ENCODE measurements at regions of chr5 and their contacts with region 1.

Region 1: GRCh38 chr5:79878721-79879336 is 112.2 kb downstream of the MTX3 start:
- DNase-seq: no peak
- ATAC-seq: no peak
- H3K4me3 ChIP-seq: no peak overlapping the region
- H3K27ac ChIP-seq: no peak overlapping the region
- H3K4me1 ChIP-seq: peaks cover 0 to 7% of the 10 kb centered on the region in 2 donors
- H3K27me3 ChIP-seq: no peaks in the 10 kb centered on the region
- CTCF ChIP-seq: no peak
- POLR2A ChIP-seq: no peak

Region 2: GRCh38 chr5:79962575-79963222 is 83.9 kb after region 1 on chr5:
- in situ Hi-C with region 1: no loop called
- intact Hi-C with region 1: loop called (anchors 10 kb)
- DNase-seq: no peak
- ATAC-seq: no peak
- H3K4me3 ChIP-seq: no peak overlapping the region
- H3K27ac ChIP-seq: no peak overlapping the region
- H3K4me1 ChIP-seq: no peaks in the 10 kb centered on the region
- H3K27me3 ChIP-seq: no peaks in the 10 kb centered on the region
- CTCF ChIP-seq: no peak
- POLR2A ChIP-seq: no peak

Measured in gastrocnemius medialis (tissue), 4 donors.